Transverse colon (tissue), 4 donors: ENCODE measurements at regions of chr1 and their contacts with region 1.

Region 1: DNA sequence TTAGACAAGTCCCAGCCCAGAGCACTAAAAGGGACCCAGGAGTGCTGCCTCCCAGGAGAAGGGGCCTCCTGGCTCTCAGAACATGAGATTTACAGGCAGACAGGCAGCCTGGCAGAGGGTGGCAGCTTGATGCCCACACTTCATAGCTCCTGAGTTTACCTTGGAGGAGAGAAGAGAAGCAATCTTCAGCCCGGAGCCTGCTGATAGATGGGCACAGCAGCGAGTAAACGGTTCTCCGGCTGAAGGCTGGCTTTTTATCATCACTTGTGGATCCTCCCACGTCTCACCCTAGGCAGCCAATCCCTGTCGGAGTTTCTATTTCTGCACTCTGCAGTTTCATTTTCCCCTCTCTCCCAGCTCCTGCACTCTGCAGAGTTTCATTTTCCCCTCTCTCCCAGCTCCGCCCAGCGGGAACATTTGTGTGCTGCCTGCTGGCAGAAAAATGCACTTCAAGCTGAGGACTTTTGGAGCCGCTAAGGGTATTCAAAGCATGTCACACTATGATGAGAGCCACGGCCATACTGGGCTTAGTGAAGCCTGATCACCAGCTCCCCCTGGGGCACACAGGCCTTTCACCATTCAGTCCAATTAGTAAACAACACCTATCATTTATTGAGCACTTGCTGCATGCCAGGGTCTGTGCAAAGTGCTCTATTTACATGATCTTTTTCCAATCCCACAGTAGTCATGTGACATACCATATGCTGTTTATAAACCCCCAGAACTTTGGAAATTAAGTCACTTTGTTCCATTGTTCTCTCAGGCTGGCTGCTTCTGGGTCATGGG is at the start of gene IFI6:
- DNase-seq: peak; percentile 84
- H3K4me3 ChIP-seq: peak within 1 kb of the TSS; percentile 31 to 53 (median 39)
- H3K27ac ChIP-seq: peak within 1 kb of the TSS; percentile 82 to 94 (median 90)
- H3K4me1 ChIP-seq: peaks cover 0 to 35% (median 8%) of the 10 kb centered on the region in 4 donors
- H3K27me3 ChIP-seq: no peaks in the 10 kb centered on the region
- CTCF ChIP-seq: peak; percentile 2 to 77 (median 42)
- EP300 ChIP-seq: no peak
- POLR2A ChIP-seq: peak; percentile 53
- total RNA-seq, gene IFI6: 1.2 to 28.1 (median 14.2) TPM

Region 2: DNA sequence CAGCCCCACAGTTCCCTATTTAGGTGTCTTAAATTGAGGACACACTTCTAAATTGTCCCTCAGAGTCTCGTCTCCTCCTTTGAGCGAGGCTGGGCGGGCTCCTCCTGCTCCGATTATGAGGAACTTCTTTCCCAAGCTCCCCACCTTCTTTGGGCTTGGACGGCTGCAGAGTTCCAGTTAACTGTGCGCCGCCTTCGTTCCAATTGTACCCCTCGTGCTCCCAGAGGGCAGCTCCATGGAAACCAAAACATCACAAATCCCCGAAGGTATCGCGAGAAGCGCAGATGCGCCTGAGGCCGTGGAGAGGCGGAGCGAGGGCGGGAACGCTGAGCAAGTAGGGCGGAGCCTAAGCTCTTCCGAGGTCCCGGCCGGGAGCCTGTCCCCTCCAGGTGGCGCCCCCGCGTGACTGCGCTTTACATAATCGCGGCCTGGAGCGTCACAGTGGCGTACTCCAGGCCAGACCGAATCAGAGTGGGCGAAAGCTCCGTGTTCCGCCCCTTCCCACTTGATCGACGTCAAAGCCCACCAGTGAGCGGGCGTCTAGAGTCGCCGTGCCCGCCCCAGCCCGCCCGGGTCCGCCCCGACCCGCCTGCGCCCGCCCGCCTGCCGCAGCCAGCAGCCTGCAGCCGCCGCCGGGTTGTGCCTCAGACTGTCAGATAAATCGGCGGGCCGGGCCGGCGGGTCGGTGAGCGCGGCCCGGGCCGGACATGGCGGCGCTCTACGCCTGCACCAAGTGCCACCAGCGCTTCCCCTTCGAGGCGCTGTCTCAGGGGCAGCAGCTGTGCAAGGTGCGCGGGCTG is 53.4 kb after region 1 on chr1 and contains the start of gene FAM76A:
- in situ Hi-C with region 1: loop called in 1 of 4 experiments (anchors 10 kb)
- intact Hi-C with region 1: loop called (anchors 10 kb)
- DNase-seq: peak; percentile 100
- H3K4me3 ChIP-seq: peak within 1 kb of the TSS; percentile 89 to 100 (median 94)
- H3K27ac ChIP-seq: peak within 1 kb of the TSS; percentile 96 to 100 (median 98)
- H3K4me1 ChIP-seq: peaks cover 4 to 24% (median 15%) of the 10 kb centered on the region in 4 donors
- H3K27me3 ChIP-seq: no peaks in the 10 kb centered on the region
- CTCF ChIP-seq: peak; percentile 26 to 41 (median 34)
- EP300 ChIP-seq: no peak
- POLR2A ChIP-seq: peak; percentile 71
- total RNA-seq, gene FAM76A: 10.5 to 29.1 (median 12.5) TPM

Region 3: DNA sequence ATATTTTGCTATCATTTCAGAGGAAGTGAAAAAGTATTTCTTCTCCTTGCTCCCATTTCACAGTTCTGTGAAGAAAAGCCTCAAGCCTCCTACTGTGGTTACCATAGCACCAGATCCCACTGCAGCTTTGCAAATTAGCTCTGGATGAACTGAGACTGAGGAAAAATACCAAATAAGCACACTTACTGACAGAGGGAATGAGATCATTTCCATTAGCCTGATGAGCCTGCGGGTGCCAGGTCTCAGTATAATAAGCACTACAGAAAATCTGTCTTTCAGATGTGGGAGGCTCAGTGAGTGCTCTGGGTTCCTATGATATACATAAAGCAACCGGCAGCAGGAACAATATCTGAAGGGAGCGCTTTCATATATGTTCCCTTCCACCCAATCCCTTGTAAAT is 309.0 kb after region 1 on chr1:
- in situ Hi-C with region 1: no loop called
- intact Hi-C with region 1: no loop called
- DNase-seq: no peak
- H3K4me3 ChIP-seq: no peak overlapping the region
- H3K27ac ChIP-seq: no peak overlapping the region
- H3K4me1 ChIP-seq: peaks cover 0 to 3% (median 0%) of the 10 kb centered on the region in 4 donors
- H3K27me3 ChIP-seq: no peaks in the 10 kb centered on the region
- CTCF ChIP-seq: no peak
- EP300 ChIP-seq: no peak
- POLR2A ChIP-seq: no peak

Region 4: DNA sequence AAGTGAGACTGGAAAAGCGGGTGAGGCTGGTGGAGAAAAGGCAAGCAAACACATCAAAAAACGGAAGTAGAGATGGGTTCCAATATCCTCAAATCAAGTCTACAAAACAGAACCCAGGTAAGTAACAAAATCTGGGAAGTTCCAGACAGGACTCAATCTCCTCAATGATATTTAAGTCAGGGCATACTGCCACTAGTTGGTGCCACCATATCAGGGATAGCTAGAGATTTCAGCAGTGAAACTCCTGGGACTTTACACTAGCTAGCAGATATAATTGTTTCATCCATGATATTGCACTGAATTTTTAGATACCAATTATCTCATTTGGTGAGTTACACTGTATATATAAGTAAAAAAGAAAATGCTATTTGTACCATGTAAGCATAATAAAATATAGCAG is 364.3 kb after region 1 on chr1:
- in situ Hi-C with region 1: no loop called
- intact Hi-C with region 1: no loop called
- DNase-seq: no peak
- H3K4me3 ChIP-seq: no peak overlapping the region
- H3K27ac ChIP-seq: no peak overlapping the region
- H3K4me1 ChIP-seq: no peaks in the 10 kb centered on the region
- H3K27me3 ChIP-seq: no peaks in the 10 kb centered on the region
- CTCF ChIP-seq: peak in 1 of 5 experiments; percentile 7
- EP300 ChIP-seq: no peak
- POLR2A ChIP-seq: no peak